ENCODE measurements at regions of chr11 and their contacts with region 1.

Region 1: DNA sequence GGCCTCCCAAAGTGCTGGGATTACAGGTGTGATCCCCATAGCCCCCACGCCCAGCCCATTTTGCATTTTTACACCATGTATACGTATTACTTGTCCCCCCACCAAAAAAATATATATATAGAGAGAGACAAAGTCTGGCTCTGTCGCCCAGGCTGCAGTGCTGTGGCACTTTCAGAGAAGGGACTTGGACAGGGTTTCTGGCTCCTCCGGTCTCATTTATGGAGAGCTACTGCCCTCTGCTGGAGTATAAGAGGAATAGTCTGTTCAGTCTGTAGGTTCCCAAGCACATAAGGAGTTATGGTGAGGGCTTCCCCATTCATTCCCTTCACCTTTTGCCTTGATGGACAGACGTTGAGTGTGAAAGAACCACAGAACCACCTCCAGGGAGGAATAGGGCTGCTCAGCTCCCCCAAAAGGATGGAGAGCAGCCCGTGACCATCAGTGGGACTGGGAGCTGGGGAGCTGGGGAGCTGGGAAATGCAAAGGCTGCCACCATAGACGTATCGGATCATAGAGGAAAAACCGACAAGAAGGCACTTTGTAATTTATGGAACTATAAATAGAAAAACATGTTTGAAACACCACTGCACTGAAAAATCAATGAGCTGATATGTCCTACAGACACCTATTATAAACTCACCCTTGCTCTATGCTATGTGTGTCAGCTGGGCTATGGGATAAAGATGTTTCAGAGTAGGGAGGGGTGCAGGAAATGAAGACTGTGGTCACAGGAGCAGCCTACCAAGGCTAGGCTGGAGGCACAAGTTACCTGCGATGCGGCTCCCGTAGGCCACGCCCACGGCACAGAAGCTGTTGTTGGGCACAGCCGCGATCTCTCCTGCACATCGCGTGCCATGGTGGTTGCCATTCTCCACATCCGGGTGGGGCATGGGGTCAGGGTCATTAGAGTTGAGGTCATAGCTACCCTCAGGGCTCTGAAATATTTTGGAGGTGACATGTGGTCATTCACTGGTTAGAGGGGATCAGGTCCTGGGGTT is 5.2 kb downstream of the PCSK7 start:
- DNase-seq: peak; percentile 84
- CTCF ChIP-seq: peak; percentile 66

Region 2: GRCh38 chr11:116879800-116880625 is 346.7 kb before region 1 on chr11:
- in situ Hi-C with region 1: loop called (anchors 10 kb)
- DNase-seq: peak; percentile 70
- CTCF ChIP-seq: peak; percentile 50

Region 3: DNA sequence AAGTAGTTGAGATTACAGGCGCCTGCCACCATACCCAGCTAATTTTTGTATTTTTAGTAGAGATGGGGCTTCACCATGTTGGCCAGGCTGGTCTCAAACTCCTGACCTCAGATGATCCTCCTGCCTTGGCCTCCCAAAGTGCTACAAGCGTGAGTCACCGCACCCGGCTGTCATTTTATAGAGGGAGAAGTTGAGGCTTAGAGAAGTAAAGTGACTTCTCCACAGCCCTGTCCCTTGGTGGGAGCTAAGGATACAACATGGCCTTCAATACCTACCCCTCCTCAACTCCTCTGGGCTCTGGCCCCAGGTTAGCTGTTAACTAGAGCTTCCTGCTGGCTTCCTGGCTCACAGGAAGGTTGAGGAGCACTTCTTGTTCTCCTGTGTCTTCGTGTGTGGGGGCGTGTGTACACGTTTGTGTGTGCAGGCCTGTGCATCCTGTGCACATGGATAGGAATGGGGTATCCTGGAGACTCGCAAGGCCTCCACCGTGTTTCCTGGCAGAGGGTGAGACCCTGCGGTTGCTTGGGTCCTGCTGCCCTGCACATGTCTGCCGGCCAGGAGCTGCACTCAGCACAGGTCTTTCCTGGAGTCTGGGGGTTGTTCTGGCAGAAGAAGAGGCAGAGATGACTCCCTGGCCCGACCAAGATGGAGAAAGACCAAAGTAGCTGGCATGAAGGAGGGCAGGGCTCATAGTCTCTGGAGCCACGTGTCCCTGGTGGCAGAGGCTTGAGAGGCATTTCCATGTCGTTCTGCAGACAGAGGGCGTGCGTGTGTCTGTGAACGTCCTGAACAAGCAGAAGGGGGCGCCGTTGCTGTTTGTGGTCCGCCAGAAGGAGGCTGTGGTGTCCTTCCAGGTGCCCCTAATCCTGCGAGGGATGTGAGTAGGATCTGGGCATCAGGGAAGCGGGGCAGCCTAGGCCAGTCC is 45.8 kb before region 1 on chr11:
- in situ Hi-C with region 1: loop called (anchors 5 kb)
- DNase-seq: peak; percentile 87
- CTCF ChIP-seq: peak; percentile 95